ENCODE measurements at regions of chrX and their contacts with region 1.

Region 1: DNA sequence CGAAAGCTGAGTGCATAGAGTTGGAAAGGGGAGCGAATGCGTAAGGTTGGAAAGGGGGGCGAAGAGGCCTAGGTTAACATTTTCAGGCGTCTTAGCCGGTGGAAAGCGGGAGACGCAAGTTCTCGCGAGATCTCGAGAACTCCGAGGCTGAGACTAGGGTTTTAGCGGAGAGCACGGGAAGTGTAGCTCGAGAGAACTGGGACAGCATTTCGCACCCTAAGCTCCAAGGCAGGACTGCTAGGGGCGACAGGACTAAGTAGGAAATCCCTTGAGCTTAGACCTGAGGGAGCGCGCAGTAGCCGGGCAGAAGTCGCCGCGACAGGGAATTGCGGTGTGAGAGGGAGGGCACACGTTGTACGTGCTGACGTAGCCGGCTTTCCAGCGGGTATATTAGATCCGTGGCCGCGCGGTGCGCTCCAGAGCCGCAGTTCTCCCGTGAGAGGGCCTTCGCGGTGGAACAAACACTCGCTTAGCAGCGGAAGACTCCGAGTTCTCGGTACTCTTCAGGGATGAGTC is at the start of gene DDX3X:
- DNase-seq: peak; percentile 81
- H3K4me3 Mint-ChIP-seq: peak within 1 kb of the TSS; percentile 91
- H3K27ac Mint-ChIP-seq: peak within 1 kb of the TSS; percentile 99
- H3K4me1 Mint-ChIP-seq: peaks cover 41% of the 10 kb centered on the region
- H3K27me3 Mint-ChIP-seq: peaks cover 5% of the 10 kb centered on the region
- total RNA-seq, gene DDX3X: 312 and 337 TPM in 2 replicates

Region 2: GRCh38 chrX:40580537-40581335 is 753.1 kb before region 1 on chrX and contains the start of gene ATP6AP2:
- intact Hi-C with region 1: loop called (anchors 5 kb)
- DNase-seq: peak; percentile 85
- H3K4me3 Mint-ChIP-seq: peak within 1 kb of the TSS; percentile 94
- H3K27ac Mint-ChIP-seq: peak within 1 kb of the TSS; percentile 97
- H3K4me1 Mint-ChIP-seq: peaks cover 17% of the 10 kb centered on the region
- H3K27me3 Mint-ChIP-seq: no peaks in the 10 kb centered on the region
- total RNA-seq, gene ATP6AP2: 65.4 and 67.1 TPM in 2 replicates

Region 3: GRCh38 chrX:41084044-41084892 is 249.5 kb before region 1 on chrX:
- intact Hi-C with region 1: loop called (anchors 1 kb)
- DNase-seq: peak; percentile 85
- H3K4me3 Mint-ChIP-seq: peak overlapping the region; percentile 90
- H3K27ac Mint-ChIP-seq: peak overlapping the region; percentile 99
- H3K4me1 Mint-ChIP-seq: peaks cover 12% of the 10 kb centered on the region
- H3K27me3 Mint-ChIP-seq: no peaks in the 10 kb centered on the region

Region 4: GRCh38 chrX:41350976-41351569 is 17.3 kb after region 1 on chrX:
- intact Hi-C with region 1: loop called (anchors 2 kb)
- DNase-seq: no peak
- H3K4me3 Mint-ChIP-seq: no peak overlapping the region
- H3K27ac Mint-ChIP-seq: peak overlapping the region; percentile 53
- H3K4me1 Mint-ChIP-seq: peaks cover 36% of the 10 kb centered on the region
- H3K27me3 Mint-ChIP-seq: no peaks in the 10 kb centered on the region

Region 5: DNA sequence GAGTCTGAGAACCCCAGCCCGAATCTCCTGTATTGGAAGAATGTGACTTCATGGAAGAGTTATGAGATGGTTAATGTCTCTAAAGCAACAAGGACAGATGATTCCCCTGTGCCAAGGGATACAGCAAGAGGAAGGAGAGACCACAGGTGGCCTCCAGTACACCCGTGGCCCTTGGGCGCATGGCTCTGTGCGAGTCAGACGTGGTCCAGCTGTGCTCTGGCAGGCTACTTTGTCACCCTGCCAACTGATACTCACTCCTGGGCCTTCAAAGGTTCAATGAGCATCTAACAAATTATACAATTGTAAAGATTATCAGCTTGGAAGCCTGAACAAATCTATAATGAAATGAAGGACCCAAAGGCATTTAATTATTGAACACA is 185.0 kb after region 1 on chrX:
- intact Hi-C with region 1: loop called (anchors 1 kb)
- DNase-seq: no peak
- H3K4me3 Mint-ChIP-seq: no peak overlapping the region
- H3K27ac Mint-ChIP-seq: peak overlapping the region; percentile 67
- H3K4me1 Mint-ChIP-seq: peaks cover 55% of the 10 kb centered on the region
- H3K27me3 Mint-ChIP-seq: no peaks in the 10 kb centered on the region

Region 6: GRCh38 chrX:41688835-41689234 is 355.0 kb after region 1 on chrX and contains the start of gene GPR34:
- intact Hi-C with region 1: no loop called
- DNase-seq: no peak
- H3K4me3 Mint-ChIP-seq: peak within 1 kb of the TSS; percentile 48
- H3K27ac Mint-ChIP-seq: peak within 1 kb of the TSS; percentile 63
- H3K4me1 Mint-ChIP-seq: peaks cover 39% of the 10 kb centered on the region
- H3K27me3 Mint-ChIP-seq: no peaks in the 10 kb centered on the region
- total RNA-seq, gene GPR34: 0.66 and 1.2 TPM in 2 replicates

Region 7: DNA sequence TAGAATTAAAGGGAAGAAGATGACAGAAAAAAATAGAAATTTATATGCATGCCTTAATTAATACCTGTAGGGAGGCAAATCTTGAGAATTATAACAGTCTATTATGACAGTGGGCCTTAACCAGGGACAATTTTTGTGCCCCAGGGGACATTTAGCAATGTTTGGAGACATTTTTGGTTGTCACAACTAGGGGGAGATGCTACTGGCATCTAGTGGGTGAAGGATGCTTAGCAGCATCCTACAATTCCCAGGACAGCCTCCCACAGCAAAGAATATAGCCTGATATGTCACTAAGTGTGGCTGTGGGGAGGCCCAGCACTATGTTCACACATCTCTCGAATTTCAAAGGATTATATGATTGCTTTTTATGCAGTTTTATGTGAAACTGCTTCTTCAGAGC is 400.7 kb after region 1 on chrX:
- intact Hi-C with region 1: loop called (anchors 5 kb)
- DNase-seq: no peak
- H3K4me3 Mint-ChIP-seq: peak overlapping the region; percentile 52
- H3K27ac Mint-ChIP-seq: peak overlapping the region; percentile 77
- H3K4me1 Mint-ChIP-seq: peaks cover 31% of the 10 kb centered on the region
- H3K27me3 Mint-ChIP-seq: no peaks in the 10 kb centered on the region